Heart left ventricle (tissue), 16 donors: ENCODE measurements at regions of chr17 and their contacts with region 1.

Region 1: GRCh38 chr17:75046582-75047289 is at the starts of genes ATP5PD and KCTD2:
- DNase-seq: peak; percentile 96 to 98 (median 97)
- ATAC-seq: peak; percentile 97 to 99 (median 98)
- H3K4me3 ChIP-seq: peak within 1 kb of the TSS; percentile 72 to 99 (median 94)
- H3K27ac ChIP-seq: peak within 1 kb of the TSS; percentile 94 to 100 (median 99)
- H3K4me1 ChIP-seq: peaks cover 0 to 44% (median 24%) of the 10 kb centered on the region in 12 donors
- H3K27me3 ChIP-seq: no peaks in the 10 kb centered on the region
- CTCF ChIP-seq: peak in 1 of 12 donors; percentile 15
- POLR2A ChIP-seq: peak; percentile 91 to 95
- total RNA-seq, gene ATP5PD: 597 to 1,208 (median 875) TPM
- total RNA-seq, gene KCTD2: 19.8 to 37.7 (median 31.5) TPM

Region 2: GRCh38 chr17:73984941-73985340 is 1061.8 kb before region 1 on chr17:
- intact Hi-C with region 1: no loop called
- DNase-seq: no peak
- ATAC-seq: no peak
- H3K4me3 ChIP-seq: no peak overlapping the region
- H3K27ac ChIP-seq: no peak overlapping the region
- H3K4me1 ChIP-seq: peaks cover 0 to 6% (median 0%) of the 10 kb centered on the region in 12 donors
- H3K27me3 ChIP-seq: peaks cover 0 to 35% (median 4%) of the 10 kb centered on the region in 9 donors
- CTCF ChIP-seq: no peak
- POLR2A ChIP-seq: no peak

Region 3: DNA sequence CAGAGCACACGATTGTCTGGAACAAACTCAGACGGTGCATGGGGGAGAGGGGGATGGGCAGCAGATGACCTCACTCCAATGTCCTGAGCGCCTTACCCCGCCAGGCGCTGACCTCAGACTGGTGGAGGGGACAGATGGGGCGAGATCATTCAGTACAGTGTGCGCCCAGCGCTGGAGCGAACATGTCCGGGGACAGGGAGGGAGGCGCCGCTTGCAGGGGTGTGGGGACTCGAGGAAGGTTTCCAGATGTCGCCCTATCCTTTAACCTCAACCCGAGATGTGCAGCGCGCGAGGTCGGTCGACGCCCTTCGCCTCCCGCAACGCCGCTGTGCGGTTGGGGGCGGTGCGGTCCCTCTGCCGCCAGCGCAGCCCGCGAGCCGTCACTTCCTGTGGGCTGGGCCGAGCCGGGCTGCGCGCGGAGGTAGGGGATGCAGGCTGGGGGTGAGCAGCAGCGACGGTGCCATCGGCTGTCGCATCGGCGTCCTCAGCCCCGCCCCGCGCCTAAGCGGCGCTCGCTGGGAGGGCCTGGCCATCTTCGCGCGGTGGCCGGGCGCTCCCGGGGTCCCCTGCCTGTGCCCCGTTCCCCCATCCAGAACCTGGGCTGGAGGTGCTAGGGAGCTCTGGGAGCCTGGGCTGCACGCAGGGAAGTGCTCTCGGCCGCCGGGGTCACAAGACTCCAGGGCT is 64.6 kb before region 1 on chr17:
- intact Hi-C with region 1: loop called in 1 of 10 experiments (anchors 5 kb)
- DNase-seq: peak; percentile 76 to 90 (median 84)
- ATAC-seq: peak; percentile 86 to 95 (median 94)
- H3K4me3 ChIP-seq: peak overlapping the region; percentile 45 to 94 (median 68)
- H3K27ac ChIP-seq: peak overlapping the region; percentile 83 to 95 (median 90)
- H3K4me1 ChIP-seq: peaks cover 6 to 27% (median 20%) of the 10 kb centered on the region in 12 donors
- H3K27me3 ChIP-seq: peaks cover 0 to 12% (median 0%) of the 10 kb centered on the region in 9 donors
- CTCF ChIP-seq: peak in 5 of 12 donors; percentile 7 to 29 (median 23)
- POLR2A ChIP-seq: peak in 1 of 2 donors; percentile 77